ENCODE measurements at regions of chr17 and their contacts with region 1.

Region 1: DNA sequence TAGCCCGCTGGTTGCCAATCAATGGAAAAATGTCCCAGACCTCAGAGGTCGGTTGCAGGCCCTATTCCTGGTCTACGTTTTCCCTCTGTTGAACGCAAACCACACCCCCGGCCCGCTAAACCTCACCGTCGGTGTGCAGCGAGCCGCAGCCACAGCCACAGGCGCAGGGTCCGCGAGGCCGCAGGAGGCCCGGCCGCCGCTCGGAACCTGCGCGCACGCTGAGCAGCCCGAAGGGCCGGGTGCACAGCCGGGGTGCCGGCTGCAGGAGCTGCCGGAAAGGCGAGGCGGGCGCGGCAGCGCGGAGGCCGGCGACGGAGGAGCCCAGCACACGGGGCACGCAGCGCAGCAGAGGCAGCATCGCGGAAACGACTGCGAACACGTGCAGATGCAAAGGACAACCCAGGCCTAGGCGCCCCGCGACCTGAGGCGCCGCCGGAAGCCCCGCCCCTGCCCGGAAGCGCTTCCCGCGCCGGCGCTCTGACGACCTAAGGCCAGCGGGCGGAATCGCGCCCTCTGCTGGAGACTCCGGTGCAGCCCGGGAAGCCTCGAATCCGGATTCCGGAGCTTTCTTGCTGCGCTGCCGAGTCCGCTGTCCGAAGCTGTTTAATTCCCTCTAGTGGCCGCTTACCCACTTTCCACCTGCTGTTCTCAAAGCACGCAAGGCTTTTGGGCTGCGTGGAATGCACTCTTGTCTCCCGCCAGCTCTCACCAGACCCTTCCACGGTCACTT is at the start of gene C1QBP:
- DNase-seq: peak; percentile 87
- H3K4me3 ChIP-seq: peak within 1 kb of the TSS; percentile 80 to 92
- H3K27ac ChIP-seq: peak within 1 kb of the TSS; percentile 60 to 71
- H3K4me1 ChIP-seq: peaks cover 9% of the 10 kb centered on the region
- H3K27me3 ChIP-seq: no peaks in the 10 kb centered on the region
- CTCF ChIP-seq: peak; percentile 91 to 100 (median 99)
- POLR2A ChIP-seq: no peak
- total RNA-seq, gene C1QBP: 140 to 146 TPM

Region 2: GRCh38 chr17:5249615-5250014 is 189.3 kb before region 1 on chr17:
- intact Hi-C with region 1: loop called (anchors 5 kb)
- DNase-seq: peak; percentile 67
- H3K4me3 ChIP-seq: no peak overlapping the region
- H3K27ac ChIP-seq: no peak overlapping the region
- H3K4me1 ChIP-seq: no peaks in the 10 kb centered on the region
- H3K27me3 ChIP-seq: no peaks in the 10 kb centered on the region
- CTCF ChIP-seq: peak in 3 of 4 experiments; percentile 60 to 79 (median 69)
- POLR2A ChIP-seq: no peak

Region 3: GRCh38 chr17:5499476-5500231 is 60.8 kb after region 1 on chr17:
- intact Hi-C with region 1: no loop called
- DNase-seq: no peak
- H3K4me3 ChIP-seq: peak overlapping the region; percentile 41 to 43
- H3K27ac ChIP-seq: no peak overlapping the region
- H3K4me1 ChIP-seq: no peaks in the 10 kb centered on the region
- H3K27me3 ChIP-seq: no peaks in the 10 kb centered on the region
- CTCF ChIP-seq: no peak
- POLR2A ChIP-seq: no peak

Region 4: GRCh38 chr17:5644065-5644464 is 205.2 kb after region 1 on chr17:
- intact Hi-C with region 1: no loop called
- DNase-seq: no peak
- H3K4me3 ChIP-seq: no peak overlapping the region
- H3K27ac ChIP-seq: no peak overlapping the region
- H3K4me1 ChIP-seq: no peaks in the 10 kb centered on the region
- H3K27me3 ChIP-seq: no peaks in the 10 kb centered on the region
- CTCF ChIP-seq: no peak
- POLR2A ChIP-seq: no peak